ENCODE measurements at regions of chr4 and their contacts with region 1.

Region 1: GRCh38 chr4:154928640-154929257 is 147.7 kb downstream of the RBM46 start:
- DNase-seq: peak in 1 of 2 experiments; percentile 17
- H3K4me3 ChIP-seq: no peak overlapping the region
- H3K27ac ChIP-seq: no peak overlapping the region
- H3K4me1 ChIP-seq: no peaks in the 10 kb centered on the region
- H3K27me3 ChIP-seq: no peaks in the 10 kb centered on the region
- CTCF ChIP-seq: peak; percentile 42 to 85 (median 60)
- EP300 ChIP-seq: no peak
- POLR2A ChIP-seq: no peak
- RAD21 ChIP-seq: peak; percentile 90 to 93

Region 2: DNA sequence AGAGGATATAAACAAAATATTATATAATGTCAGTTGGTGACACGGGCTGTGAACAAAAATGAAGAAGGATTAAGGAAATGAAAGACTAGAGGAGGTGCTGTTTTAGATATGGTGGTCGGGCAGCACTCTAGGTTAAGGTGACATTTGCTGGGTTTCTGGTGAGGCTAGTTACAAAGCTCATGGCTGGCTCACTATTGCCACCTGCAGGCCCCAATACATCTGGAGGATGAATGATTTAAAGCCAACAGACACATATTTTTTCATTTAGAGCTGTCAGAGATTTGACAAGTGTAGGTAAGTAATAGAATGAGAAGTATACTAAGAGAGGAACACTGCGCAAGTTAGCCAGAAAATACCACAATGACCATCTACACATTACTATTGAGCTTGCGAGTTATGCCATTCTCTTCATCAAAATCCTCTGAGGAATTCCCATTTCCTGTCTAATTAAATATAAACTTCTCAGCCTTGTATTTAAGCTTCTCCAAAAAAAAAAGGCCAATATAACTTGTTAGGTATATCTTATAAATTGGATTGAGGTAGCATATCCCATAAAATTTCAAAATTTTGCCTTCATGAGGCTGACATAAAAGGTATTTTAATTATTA is 309.9 kb before region 1 on chr4:
- CTCF ChIA-PET with region 1: interaction called, 10 read pairs
- POLR2A ChIA-PET with region 1: no interaction called
- DNase-seq: peak; percentile 27 to 59
- H3K4me3 ChIP-seq: no peak overlapping the region
- H3K27ac ChIP-seq: no peak overlapping the region
- H3K4me1 ChIP-seq: no peaks in the 10 kb centered on the region
- H3K27me3 ChIP-seq: peaks cover 0 to 1% (median 0%) of the 10 kb centered on the region in 4 experiments; a peak in 1 of 7 replicates
- CTCF ChIP-seq: peak; percentile 25 to 77 (median 72)
- EP300 ChIP-seq: no peak
- POLR2A ChIP-seq: no peak
- RAD21 ChIP-seq: peak; percentile 79 to 82

Region 3: DNA sequence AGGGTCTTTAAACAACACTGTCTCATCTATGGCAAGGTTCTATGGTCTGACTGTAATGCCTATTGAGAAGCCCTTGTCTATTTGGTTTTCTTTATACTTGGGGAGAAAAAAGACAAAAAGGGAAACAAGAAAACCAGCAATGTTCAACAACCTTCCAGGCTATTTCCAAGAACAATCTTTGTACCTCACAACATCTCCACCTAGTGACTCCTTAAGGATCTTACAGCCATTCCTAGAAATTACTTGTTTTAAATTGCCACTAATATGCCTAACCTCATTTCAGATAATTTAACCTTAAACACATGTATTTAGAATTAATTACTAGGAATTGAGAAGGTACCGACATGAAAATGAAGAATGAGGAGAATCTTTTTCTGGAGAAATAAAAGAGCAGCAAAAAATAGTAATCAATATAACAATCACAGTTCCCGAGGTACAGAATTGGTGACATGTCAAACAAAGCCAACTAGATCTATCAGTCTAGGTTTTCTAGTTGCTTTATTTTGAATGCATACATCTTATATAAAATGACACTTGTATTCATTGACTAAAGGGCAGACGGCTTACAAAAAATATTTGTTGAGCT is 149.3 kb before region 1 on chr4:
- CTCF ChIA-PET with region 1: interaction called, 13 read pairs
- POLR2A ChIA-PET with region 1: no interaction called
- DNase-seq: no peak
- H3K4me3 ChIP-seq: no peak overlapping the region
- H3K27ac ChIP-seq: no peak overlapping the region
- H3K4me1 ChIP-seq: no peaks in the 10 kb centered on the region
- H3K27me3 ChIP-seq: no peaks in the 10 kb centered on the region
- CTCF ChIP-seq: peak in 2 of 3 experiments; percentile 58; a peak in 2 of 4 replicates
- EP300 ChIP-seq: no peak
- POLR2A ChIP-seq: no peak
- RAD21 ChIP-seq: peak; percentile 73 to 74

Region 4: DNA sequence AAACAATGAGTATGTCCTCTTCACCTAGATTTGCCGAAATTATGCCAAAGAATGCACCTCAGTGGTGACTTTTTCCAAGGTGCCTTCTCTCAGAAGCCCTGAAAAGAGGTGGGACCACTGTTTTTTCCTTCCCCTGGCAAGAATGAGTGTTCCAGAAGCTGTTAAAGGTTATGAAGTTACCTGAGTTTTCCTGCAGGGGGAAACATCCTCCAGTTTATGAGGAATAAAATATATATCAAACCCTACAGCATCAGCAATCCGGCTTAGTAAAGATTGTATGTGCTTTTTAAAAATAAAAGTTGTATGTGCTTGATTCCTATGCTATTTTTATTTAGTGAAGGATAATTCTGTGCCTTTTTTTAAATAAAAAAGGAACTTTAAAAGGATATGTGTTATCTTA is 74.4 kb before region 1 on chr4:
- CTCF ChIA-PET with region 1: interaction called, 76 read pairs
- POLR2A ChIA-PET with region 1: no interaction called
- DNase-seq: no peak
- H3K4me3 ChIP-seq: no peak overlapping the region
- H3K27ac ChIP-seq: no peak overlapping the region
- H3K4me1 ChIP-seq: no peaks in the 10 kb centered on the region
- H3K27me3 ChIP-seq: no peaks in the 10 kb centered on the region
- CTCF ChIP-seq: peak in 2 of 3 experiments; percentile 37 to 55; a peak in 2 of 4 replicates
- EP300 ChIP-seq: no peak
- POLR2A ChIP-seq: no peak
- RAD21 ChIP-seq: peak; percentile 59 to 60

Region 5: DNA sequence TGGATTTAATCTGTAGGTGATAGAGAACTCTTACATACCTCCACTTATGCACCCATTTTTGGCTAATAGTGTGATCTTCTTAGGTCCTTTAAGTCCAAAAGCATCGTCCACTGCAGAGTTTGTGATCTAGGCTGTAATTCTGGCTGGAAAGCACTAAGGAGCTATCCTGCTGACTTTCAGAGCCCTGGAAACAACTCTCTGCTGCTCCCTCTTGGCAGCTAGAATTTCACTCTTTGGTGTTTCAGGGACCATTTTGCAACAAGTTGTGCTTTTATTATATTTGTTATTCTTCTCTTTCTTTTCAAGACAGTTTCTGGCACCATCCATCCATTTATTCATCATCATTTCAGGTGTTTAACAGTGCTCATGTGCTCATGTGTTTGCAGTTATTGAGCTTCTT is 17.7 kb before region 1 on chr4:
- CTCF ChIA-PET with region 1: interaction called, 45 read pairs
- POLR2A ChIA-PET with region 1: no interaction called
- DNase-seq: no peak
- H3K4me3 ChIP-seq: no peak overlapping the region
- H3K27ac ChIP-seq: no peak overlapping the region
- H3K4me1 ChIP-seq: peaks cover 1 to 11% (median 4%) of the 10 kb centered on the region in 4 experiments; a peak in 4 of 7 replicates
- H3K27me3 ChIP-seq: no peaks in the 10 kb centered on the region
- CTCF ChIP-seq: peak in 2 of 3 experiments; percentile 52 to 56; a peak in 3 of 4 replicates
- EP300 ChIP-seq: no peak
- POLR2A ChIP-seq: no peak
- RAD21 ChIP-seq: peak; percentile 55 to 67

Measured in H1 (cell line).